ENCODE measurements at regions of chr5 and their contacts with region 1.

Region 1: DNA sequence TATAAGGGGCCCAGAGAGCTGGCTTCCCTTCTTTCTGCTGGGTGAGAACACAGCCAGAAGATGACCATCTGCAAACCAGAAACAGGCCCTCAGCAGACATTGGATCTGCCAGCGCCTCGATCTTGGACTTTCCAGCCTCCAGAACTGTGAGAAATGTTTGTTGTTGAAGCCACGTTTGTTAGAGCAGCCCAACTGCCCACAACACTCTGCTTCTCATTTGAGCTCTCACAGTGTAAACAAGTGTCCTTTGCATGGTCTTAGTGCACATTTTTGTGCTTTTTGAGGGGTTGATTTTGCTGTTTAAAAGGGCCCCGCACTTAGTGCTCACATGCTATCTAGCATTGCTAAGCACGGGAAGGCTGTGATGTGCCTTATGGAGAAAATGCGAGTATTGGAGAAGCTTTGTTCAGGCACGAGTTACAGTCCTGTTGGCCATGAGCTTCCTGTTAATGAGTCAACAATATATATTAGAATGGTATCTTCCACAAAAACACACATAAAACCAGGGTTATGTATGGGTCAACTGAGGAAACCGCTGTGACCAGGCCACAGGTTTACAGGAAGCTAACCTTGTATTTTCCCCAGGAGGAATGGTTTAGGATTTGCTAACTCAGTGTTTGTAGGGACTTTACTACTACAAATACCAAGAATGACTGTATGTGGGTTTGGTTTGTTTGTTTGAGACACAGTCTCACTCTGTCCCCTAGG is 11.9 kb downstream of the CMBL start:
- DNase-seq: no peak
- ATAC-seq: no peak
- H3K4me3 ChIP-seq: no peak overlapping the region
- H3K27ac ChIP-seq: no peak overlapping the region
- H3K4me1 ChIP-seq: peaks cover 0 to under 1% (median 0%) of the 10 kb centered on the region in 3 donors
- H3K27me3 ChIP-seq: no peaks in the 10 kb centered on the region
- CTCF ChIP-seq: no peak

Region 2: DNA sequence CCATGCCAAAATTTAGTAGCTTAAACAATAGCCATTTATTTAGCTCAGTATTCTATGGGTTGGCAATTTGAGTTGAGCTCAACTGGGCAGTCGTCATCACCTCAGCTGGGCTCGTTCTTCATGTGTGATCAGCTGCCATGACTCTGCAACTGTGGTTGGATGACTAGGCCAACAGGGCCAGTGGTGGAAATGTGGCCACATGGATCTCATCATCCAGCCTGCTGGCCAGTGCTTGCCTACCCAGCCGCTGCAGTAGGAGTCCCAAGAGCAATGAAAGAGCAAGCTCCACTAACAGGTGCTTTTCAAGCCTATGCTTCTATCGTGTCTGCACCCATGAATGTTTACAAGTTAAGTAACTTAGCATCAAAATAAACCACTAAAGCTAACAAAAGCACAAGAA is 204.1 kb before region 1 on chr5:
- intact Hi-C with region 1: no loop called
- DNase-seq: no peak
- ATAC-seq: no peak
- H3K4me3 ChIP-seq: no peak overlapping the region
- H3K27ac ChIP-seq: no peak overlapping the region
- H3K4me1 ChIP-seq: no peaks in the 10 kb centered on the region
- H3K27me3 ChIP-seq: no peaks in the 10 kb centered on the region
- CTCF ChIP-seq: no peak

Region 3: GRCh38 chr5:10343486-10343885 is 47.7 kb after region 1 on chr5:
- intact Hi-C with region 1: loop called in 1 of 3 experiments (anchors 10 kb)
- DNase-seq: no peak
- ATAC-seq: no peak
- H3K4me3 ChIP-seq: no peak overlapping the region
- H3K27ac ChIP-seq: no peak overlapping the region
- H3K4me1 ChIP-seq: no peaks in the 10 kb centered on the region
- H3K27me3 ChIP-seq: no peaks in the 10 kb centered on the region
- CTCF ChIP-seq: no peak